HEK293 (cell line): ENCODE measurements at regions of chr18 and their contacts with region 1.

Region 1: DNA sequence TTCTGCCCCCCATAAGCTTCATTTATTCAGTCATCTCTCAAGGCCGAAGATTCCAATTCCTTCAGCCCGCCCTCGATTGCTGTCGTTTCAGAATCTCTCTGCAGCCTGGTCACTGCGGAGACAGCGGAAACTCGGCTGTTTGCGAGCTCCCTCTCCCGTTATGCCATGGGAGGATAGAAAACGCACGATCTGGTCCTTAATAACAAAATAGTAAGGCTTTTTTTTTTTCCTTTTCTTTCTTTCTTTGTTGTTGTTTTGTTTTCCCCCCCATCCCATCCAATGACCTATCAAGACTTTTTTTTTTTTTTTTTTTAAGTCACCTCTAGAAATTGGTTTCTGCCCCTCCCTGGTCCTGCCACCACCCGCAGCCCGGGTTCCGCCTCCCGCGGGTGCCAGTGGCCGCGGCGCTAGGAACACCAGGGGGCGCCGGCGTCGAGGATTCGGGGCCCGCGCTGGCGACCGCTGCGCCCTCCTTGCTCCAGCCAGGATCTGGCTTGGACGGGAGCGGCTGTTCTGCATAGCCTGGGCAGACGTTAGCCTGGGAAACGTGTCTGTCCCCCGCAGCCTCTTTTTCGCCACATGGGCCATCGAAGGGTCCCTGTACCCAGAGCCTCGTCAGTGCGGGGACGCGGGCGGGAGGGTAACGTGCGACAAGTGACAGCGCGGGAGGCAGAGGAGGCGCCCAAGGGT is 10.1 kb downstream of the CPLX4 start:
- H3K4me3 ChIP-seq: peak overlapping the region; percentile 41
- H3K27ac ChIP-seq: no peak overlapping the region
- H3K4me1 ChIP-seq: peaks cover 5% of the 10 kb centered on the region
- CTCF ChIP-seq: peak; percentile 94

Region 2: GRCh38 chr18:58730618-58731017 is 577.8 kb before region 1 on chr18:
- CTCF ChIA-PET with region 1: no interaction called
- POLR2A ChIA-PET with region 1: no interaction called
- H3K4me3 ChIP-seq: no peak overlapping the region
- H3K27ac ChIP-seq: no peak overlapping the region
- H3K4me1 ChIP-seq: 0 out of 2 replicates have a peak, but pooled peaks cover 5% of the 10 kb centered on the region
- CTCF ChIP-seq: no peak

Region 3: DNA sequence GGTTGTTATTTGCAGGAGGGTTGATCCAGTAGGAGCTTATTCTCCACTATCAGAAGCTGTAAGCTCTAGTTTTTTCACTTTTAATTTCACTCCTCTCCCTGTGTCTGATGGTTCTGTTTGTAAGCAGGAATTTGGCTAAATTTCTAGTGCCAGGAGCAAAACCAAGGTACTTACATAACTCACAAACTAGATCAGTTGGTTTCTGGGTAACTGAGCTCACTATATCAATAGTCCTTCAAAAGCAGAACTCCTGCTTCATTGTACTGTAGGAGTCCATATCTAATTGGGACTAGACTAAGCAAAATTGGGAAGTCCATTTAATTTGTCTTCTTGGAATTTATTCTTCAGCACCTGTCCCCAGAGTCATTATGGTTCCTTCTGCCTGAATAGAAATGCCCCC is 15.1 kb before region 1 on chr18:
- CTCF ChIA-PET with region 1: interaction called, 14 read pairs
- POLR2A ChIA-PET with region 1: no interaction called
- H3K4me3 ChIP-seq: no peak overlapping the region
- H3K27ac ChIP-seq: no peak overlapping the region
- H3K4me1 ChIP-seq: no peaks in the 10 kb centered on the region
- CTCF ChIP-seq: no peak

Region 4: DNA sequence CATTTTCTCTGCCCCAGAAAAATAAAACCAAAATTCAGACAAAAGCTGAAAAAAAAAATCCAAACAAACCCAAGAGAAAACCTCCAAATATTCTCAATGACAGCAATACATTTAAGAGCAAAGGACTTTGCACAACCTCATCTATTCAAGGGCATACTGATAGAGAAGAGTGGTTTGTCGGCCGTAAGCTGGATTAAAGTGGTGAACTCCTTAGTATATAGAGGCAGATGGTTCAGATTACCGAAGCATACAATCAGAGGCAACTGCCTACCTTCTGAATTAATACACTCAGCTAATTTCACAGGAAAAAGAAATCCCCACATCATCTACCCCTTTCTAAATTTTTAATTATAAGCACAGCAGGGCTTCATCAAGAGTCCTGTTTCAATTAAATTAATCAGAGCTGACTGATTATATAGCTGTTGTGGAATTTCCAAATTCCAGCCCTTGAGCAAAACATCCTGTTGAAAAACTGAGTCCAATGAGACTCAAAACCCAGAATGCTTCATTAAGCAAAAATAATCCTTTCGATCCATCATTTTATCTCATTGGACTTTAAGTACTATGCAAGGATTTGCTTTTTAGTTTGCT is 10.2 kb after region 1 on chr18 and contains the start of gene CPLX4:
- CTCF ChIA-PET with region 1: interaction called, 37 read pairs
- POLR2A ChIA-PET with region 1: no interaction called
- H3K4me3 ChIP-seq: no peak within 1 kb of the TSS
- H3K27ac ChIP-seq: no peak within 1 kb of the TSS
- H3K4me1 ChIP-seq: 0 out of 2 replicates have a peak, but pooled peaks cover 3% of the 10 kb centered on the region
- CTCF ChIP-seq: no peak

Region 5: GRCh38 chr18:59353079-59353680 is 44.8 kb after region 1 on chr18:
- CTCF ChIA-PET with region 1: interaction called, 12 read pairs
- POLR2A ChIA-PET with region 1: no interaction called
- H3K4me3 ChIP-seq: no peak overlapping the region
- H3K27ac ChIP-seq: no peak overlapping the region
- H3K4me1 ChIP-seq: peaks cover 8% of the 10 kb centered on the region
- CTCF ChIP-seq: no peak